ENCODE measurements at regions of chr19 and their contacts with region 1.

Region 1: DNA sequence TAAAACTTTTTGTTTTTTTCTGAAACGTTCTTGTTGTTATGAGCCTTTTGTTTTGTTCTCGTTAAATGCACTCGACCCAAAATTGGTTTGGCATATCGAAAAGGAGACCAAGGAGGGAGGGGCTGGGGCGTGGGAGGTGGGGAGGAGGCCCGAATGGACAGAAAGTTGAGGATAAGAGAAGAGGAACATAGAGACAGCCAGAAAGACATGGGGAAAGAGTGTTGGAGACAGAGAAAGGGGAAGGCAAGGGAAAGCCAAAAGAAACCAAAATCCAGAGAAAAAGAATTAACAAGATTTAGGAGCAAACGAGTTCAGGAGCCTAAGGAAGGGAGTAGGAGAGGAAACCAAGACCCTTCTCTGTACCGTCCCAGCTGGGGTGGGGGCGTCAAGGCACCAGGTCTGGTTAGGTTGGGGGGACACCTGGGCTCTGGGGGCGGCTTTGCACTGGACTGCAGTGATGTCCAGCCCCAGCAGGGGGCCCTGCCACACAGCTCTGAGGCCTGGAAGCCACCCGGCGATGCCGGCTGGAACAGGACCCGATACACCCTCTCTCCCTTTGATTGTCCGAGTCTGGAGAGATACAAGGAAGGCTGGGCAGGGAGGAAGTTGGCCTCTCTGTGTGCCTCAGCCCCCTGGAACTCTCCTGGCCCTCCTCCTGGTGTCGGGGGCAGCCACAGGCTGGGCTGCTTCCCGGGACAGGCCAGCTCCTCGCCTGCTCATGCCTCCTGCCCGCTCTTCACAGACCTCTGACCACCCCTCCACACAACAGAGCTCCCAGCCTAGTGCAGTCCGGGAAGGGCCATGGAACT is 11.6 kb upstream of the ASF1B start:
- DNase-seq: no peak
- ATAC-seq: peak; percentile 89
- H3K4me3 ChIP-seq: no peak overlapping the region
- H3K27ac ChIP-seq: peak overlapping the region; percentile 44; the same call in 1 of the 2 replicates
- H3K4me1 ChIP-seq: peaks cover 19% of the 10 kb centered on the region
- H3K27me3 ChIP-seq: no peaks in the 10 kb centered on the region
- CTCF ChIP-seq: peak; percentile 89

Region 2: DNA sequence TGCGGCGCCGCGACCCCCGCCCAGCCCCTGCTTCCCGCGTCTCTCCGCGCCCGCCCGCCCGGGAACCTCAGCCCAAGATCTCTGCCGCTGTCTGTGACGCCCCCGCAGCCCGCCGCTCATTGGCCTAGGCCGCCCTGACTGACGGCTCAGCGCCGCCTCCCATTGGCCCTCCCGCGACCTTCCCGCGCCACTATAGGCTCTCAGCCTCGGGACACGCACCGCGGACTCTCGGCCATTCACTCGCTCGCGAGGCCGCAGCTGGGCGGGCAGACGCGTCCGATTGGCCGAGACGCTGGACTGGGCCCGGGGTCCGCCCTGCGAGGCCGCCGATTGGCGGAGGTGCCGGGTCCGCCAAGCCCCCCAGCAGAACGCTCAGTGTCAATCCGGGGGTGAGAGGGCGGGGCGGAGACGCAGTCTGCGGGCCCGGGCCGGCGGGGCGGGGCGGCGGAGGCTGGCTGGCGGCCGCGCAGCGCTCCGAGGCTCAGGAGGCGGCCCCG is 30.3 kb before region 1 on chr19 and contains the start of gene PRKACA:
- CTCF ChIA-PET with region 1: interaction called, 12 read pairs
- POLR2A ChIA-PET with region 1: no interaction called
- in situ Hi-C with region 1: no loop called
- intact Hi-C with region 1: no loop called
- DNase-seq: peak; percentile 73
- ATAC-seq: peak; percentile 95
- H3K4me3 ChIP-seq: peak within 1 kb of the TSS; percentile 62 to 65
- H3K27ac ChIP-seq: peak within 1 kb of the TSS; percentile 92
- H3K4me1 ChIP-seq: peaks cover 37% of the 10 kb centered on the region
- H3K27me3 ChIP-seq: no peaks in the 10 kb centered on the region
- CTCF ChIP-seq: no peak
- total RNA-seq, gene PRKACA: 70.8 TPM

Region 3: DNA sequence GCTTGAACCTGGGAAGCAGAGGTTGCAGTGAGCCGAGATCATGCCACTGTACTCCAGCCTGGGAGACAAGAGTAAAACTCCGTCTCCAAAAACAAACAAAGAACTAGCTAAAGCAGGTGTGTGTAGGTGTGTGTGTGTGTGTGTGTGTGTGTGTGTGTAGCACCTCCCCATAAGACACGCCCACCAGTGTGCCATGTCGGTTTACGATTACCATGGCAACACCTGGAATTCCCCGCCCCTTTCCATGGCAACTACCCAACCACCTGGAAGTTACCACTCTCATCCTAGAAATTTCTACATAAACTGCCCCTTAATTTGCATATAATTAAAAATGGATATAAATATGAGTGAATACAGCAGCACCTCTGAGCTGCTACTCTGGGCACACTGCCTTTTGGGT is 152.3 kb after region 1 on chr19:
- CTCF ChIA-PET with region 1: no interaction called
- POLR2A ChIA-PET with region 1: no interaction called
- in situ Hi-C with region 1: no loop called
- intact Hi-C with region 1: no loop called
- DNase-seq: no peak
- ATAC-seq: no peak
- H3K4me3 ChIP-seq: no peak overlapping the region
- H3K27ac ChIP-seq: no peak overlapping the region
- H3K4me1 ChIP-seq: no peaks in the 10 kb centered on the region
- H3K27me3 ChIP-seq: no peaks in the 10 kb centered on the region
- CTCF ChIP-seq: no peak

Region 4: DNA sequence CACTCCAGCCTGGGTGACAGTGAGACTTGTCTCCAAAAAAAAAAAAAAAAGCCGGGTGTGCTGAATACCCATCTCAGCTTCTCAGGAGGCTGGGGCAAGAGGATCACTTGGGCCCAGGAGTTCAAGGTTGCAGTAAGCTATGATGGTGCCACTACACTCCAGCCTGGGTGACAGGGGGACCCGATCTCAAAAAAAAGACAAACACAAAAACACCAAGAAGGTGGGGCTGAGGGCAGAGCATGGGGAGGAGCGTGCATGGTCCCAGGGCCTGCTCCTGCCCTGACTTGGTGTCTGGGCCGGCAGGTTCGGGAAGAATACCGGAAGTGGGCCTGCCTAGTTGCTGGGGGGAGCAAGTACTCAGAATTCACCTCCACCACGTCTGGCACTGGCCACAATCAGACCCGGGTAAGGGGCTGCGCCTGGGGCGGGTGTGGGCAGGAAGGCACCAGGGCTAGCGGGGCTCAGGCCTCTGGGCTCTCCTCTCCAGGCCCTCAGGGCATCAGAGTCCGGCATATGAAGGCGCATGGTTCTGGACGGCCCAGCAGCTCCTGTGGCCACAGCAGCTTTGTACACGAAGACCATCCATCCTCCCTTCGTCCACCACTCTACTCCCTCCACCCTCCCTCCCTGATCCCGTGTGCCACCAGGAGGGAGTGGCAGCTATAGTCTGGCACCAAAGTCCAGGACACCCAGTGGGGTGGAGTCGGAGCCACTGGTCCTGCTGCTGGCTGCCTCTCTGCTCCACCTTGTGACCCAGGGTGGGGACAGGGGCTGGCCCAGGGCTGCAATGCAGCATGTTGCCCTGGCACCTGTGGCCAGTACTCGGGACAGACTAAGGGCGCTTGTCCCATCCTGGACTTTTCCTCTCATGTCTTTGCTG is 259.8 kb after region 1 on chr19:
- CTCF ChIA-PET with region 1: interaction called, 3 read pairs
- POLR2A ChIA-PET with region 1: interaction called, 12 read pairs
- in situ Hi-C with region 1: no loop called
- intact Hi-C with region 1: no loop called
- DNase-seq: no peak
- ATAC-seq: peak; percentile 36
- H3K4me3 ChIP-seq: no peak overlapping the region
- H3K27ac ChIP-seq: peak overlapping the region; percentile 59; the same call in 1 of the 2 replicates
- H3K4me1 ChIP-seq: peaks cover 13% of the 10 kb centered on the region
- H3K27me3 ChIP-seq: no peaks in the 10 kb centered on the region
- CTCF ChIP-seq: no peak